HEK293 (cell line): ENCODE measurements at regions of chr16 and their contacts with region 1.

Region 1: GRCh38 chr16:22098405-22099255 is 6.3 kb downstream of the VWA3A start:
- H3K4me3 ChIP-seq: no peak overlapping the region
- H3K27ac ChIP-seq: no peak overlapping the region
- H3K4me1 ChIP-seq: no peaks in the 10 kb centered on the region
- CTCF ChIP-seq: peak; percentile 84

Region 2: GRCh38 chr16:21989133-21989532 is 109.5 kb before region 1 on chr16:
- CTCF ChIA-PET with region 1: interaction called, 11 read pairs
- POLR2A ChIA-PET with region 1: no interaction called
- H3K4me3 ChIP-seq: no peak overlapping the region
- H3K27ac ChIP-seq: no peak overlapping the region
- H3K4me1 ChIP-seq: peaks cover 13% of the 10 kb centered on the region
- CTCF ChIP-seq: no peak

Region 3: GRCh38 chr16:22001591-22001990 is 97.0 kb before region 1 on chr16:
- CTCF ChIA-PET with region 1: interaction called, 17 read pairs
- POLR2A ChIA-PET with region 1: interaction called, 3 read pairs
- H3K4me3 ChIP-seq: no peak overlapping the region
- H3K27ac ChIP-seq: no peak overlapping the region
- H3K4me1 ChIP-seq: no peaks in the 10 kb centered on the region; the same call in 1 of the 2 replicates
- CTCF ChIP-seq: no peak

Region 4: GRCh38 chr16:22055878-22056277 is 42.8 kb before region 1 on chr16:
- CTCF ChIA-PET with region 1: interaction called, 10 read pairs
- POLR2A ChIA-PET with region 1: no interaction called
- H3K4me3 ChIP-seq: no peak overlapping the region
- H3K27ac ChIP-seq: no peak overlapping the region
- H3K4me1 ChIP-seq: no peaks in the 10 kb centered on the region
- CTCF ChIP-seq: no peak

Region 5: GRCh38 chr16:22109258-22109898 is 10.7 kb after region 1 on chr16:
- CTCF ChIA-PET with region 1: interaction called, 18 read pairs
- POLR2A ChIA-PET with region 1: no interaction called
- H3K4me3 ChIP-seq: no peak overlapping the region
- H3K27ac ChIP-seq: no peak overlapping the region
- H3K4me1 ChIP-seq: no peaks in the 10 kb centered on the region
- CTCF ChIP-seq: no peak

Region 6: GRCh38 chr16:22117609-22118008 is 19.0 kb after region 1 on chr16:
- CTCF ChIA-PET with region 1: interaction called, 11 read pairs
- POLR2A ChIA-PET with region 1: no interaction called
- H3K4me3 ChIP-seq: no peak overlapping the region
- H3K27ac ChIP-seq: no peak overlapping the region
- H3K4me1 ChIP-seq: no peaks in the 10 kb centered on the region
- CTCF ChIP-seq: no peak

Region 7: DNA sequence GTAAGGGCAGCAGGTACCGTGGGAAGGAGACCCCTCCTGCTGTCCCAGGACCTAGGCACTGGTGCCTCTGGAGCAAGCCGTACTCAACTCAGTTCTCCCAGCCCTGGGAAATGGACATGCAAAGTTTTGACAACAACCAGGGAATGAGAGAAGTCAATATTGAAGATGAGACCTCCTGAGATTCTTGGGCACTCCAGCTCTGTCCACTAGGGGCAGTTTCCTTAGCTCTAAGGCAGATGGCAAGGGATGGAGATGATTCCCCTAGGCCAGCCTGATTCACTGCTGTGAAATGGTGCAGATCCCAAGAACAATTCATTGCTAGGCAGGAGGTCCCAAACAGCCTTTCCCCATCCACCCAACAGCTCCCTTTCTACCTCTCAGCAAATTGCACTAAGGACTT is 43.1 kb after region 1 on chr16:
- CTCF ChIA-PET with region 1: interaction called, 10 read pairs
- POLR2A ChIA-PET with region 1: no interaction called
- H3K4me3 ChIP-seq: no peak overlapping the region
- H3K27ac ChIP-seq: no peak overlapping the region
- H3K4me1 ChIP-seq: no peaks in the 10 kb centered on the region
- CTCF ChIP-seq: no peak

Region 8: DNA sequence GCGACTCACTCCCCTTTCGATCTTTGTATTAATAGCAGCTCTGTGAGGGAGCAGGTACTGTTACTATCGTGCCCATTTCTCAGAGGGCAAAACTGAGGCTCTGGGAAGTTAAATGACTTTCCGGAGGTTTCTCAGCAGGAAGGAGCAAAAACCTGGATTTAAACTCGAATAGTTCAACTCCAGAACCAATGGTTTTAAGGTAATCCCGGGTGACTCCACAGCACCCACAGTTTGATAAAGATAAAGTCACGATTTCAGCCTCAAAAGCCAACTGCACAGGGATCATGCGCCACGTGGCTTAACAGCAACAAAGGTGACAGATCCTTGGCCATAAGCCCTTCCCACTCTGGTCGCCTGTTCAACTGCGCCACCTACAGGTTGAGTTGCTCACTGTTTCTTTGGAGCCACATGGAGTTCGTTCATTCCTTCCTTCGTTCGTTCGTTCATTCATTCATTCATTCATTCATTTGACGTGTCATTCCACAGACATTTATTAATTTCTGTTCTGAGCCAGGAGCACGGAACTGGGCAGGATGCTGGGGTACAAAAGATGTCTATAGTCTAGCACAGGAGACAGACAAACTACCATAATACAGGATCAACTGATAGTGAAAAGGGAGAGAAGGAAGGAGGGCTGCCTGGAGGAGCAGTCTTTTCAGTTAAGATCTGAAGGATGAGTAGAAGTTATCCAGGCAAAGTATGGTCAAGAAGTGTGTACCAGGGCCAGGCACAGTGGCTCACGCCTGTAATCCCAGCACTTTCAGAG is 850.2 kb after region 1 on chr16:
- CTCF ChIA-PET with region 1: no interaction called
- POLR2A ChIA-PET with region 1: no interaction called
- H3K4me3 ChIP-seq: no peak overlapping the region
- H3K27ac ChIP-seq: no peak overlapping the region
- H3K4me1 ChIP-seq: no peaks in the 10 kb centered on the region
- CTCF ChIP-seq: peak; percentile 81